Gastrocnemius medialis (tissue), 4 donors: ENCODE measurements at regions of chr4 and their contacts with region 1.

Region 1: GRCh38 chr4:185534866-185535611 is at the start of gene PDLIM3:
- DNase-seq: no peak
- ATAC-seq: peak; percentile 51 to 57
- H3K4me3 ChIP-seq: peak within 1 kb of the TSS; percentile 74 to 81 (median 80)
- H3K27ac ChIP-seq: peak within 1 kb of the TSS; percentile 89 to 98 (median 96)
- H3K4me1 ChIP-seq: peaks cover 26 to 34% of the 10 kb centered on the region in 2 donors
- H3K27me3 ChIP-seq: no peaks in the 10 kb centered on the region
- CTCF ChIP-seq: peak in 1 of 5 experiments; percentile 12
- POLR2A ChIP-seq: peak; percentile 99 to 100
- total RNA-seq, gene PDLIM3: 1,062 to 7,224 (median 2,598) TPM

Region 2: GRCh38 chr4:184343502-184344177 is 1191.4 kb before region 1 on chr4:
- in situ Hi-C with region 1: no loop called
- intact Hi-C with region 1: loop called (anchors 10 kb)
- DNase-seq: peak; percentile 77 to 84
- ATAC-seq: peak; percentile 64 to 69
- H3K4me3 ChIP-seq: peak overlapping the region; percentile 56 to 82 (median 67)
- H3K27ac ChIP-seq: peak overlapping the region; percentile 91 to 97 (median 92)
- H3K4me1 ChIP-seq: peaks cover 51 to 54% of the 10 kb centered on the region in 2 donors
- H3K27me3 ChIP-seq: no peaks in the 10 kb centered on the region
- CTCF ChIP-seq: no peak
- POLR2A ChIP-seq: peak; percentile 50 to 69

Region 3: GRCh38 chr4:185383491-185383890 is 151.5 kb before region 1 on chr4:
- in situ Hi-C with region 1: no loop called
- intact Hi-C with region 1: no loop called
- DNase-seq: no peak
- ATAC-seq: no peak
- H3K4me3 ChIP-seq: no peak overlapping the region
- H3K27ac ChIP-seq: no peak overlapping the region
- H3K4me1 ChIP-seq: peaks cover 0 to 4% of the 10 kb centered on the region in 2 donors
- H3K27me3 ChIP-seq: no peaks in the 10 kb centered on the region
- CTCF ChIP-seq: no peak
- POLR2A ChIP-seq: no peak

Region 4: DNA sequence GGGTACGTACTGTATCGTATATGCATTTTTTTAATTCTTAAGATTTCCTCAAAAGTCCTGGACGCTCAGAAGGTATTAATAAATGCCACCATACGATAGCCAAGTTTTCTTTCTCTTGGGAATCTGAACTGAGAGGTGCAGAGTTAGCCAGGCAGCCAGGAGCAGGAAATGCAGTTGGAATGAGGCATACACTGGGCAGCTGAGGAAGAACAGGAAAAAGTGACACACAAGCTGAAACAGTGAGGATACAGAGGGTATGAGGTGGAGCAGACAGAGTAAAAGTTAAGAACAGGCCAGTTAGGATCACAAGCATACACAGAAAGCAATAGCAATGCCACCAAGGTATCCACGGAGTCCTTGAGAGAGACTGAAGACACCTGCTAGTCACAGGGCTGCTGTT is 122.6 kb before region 1 on chr4:
- in situ Hi-C with region 1: no loop called
- intact Hi-C with region 1: no loop called
- DNase-seq: no peak
- ATAC-seq: no peak
- H3K4me3 ChIP-seq: no peak overlapping the region
- H3K27ac ChIP-seq: peak overlapping the region in 1 of 4 donors; percentile 8
- H3K4me1 ChIP-seq: peaks cover 0 to 4% of the 10 kb centered on the region in 2 donors
- H3K27me3 ChIP-seq: no peaks in the 10 kb centered on the region
- CTCF ChIP-seq: no peak
- POLR2A ChIP-seq: no peak

Region 5: GRCh38 chr4:185504098-185505047 is 30.7 kb before region 1 on chr4:
- in situ Hi-C with region 1: no loop called
- intact Hi-C with region 1: loop called (anchors 1 kb)
- DNase-seq: peak; percentile 91 to 97
- ATAC-seq: peak; percentile 82 to 87
- H3K4me3 ChIP-seq: peak overlapping the region in 3 of 4 donors; percentile 10 to 22 (median 17)
- H3K27ac ChIP-seq: peak overlapping the region; percentile 83 to 96 (median 92)
- H3K4me1 ChIP-seq: peaks cover 41 to 58% of the 10 kb centered on the region in 2 donors
- H3K27me3 ChIP-seq: no peaks in the 10 kb centered on the region
- CTCF ChIP-seq: no peak
- POLR2A ChIP-seq: peak in 1 of 2 donors; percentile 41

Region 6: GRCh38 chr4:185566972-185567371 is 31.9 kb after region 1 on chr4:
- in situ Hi-C with region 1: no loop called
- intact Hi-C with region 1: loop called (anchors 2 kb)
- DNase-seq: no peak
- ATAC-seq: peak; percentile 17 to 31
- H3K4me3 ChIP-seq: peak overlapping the region in 1 of 4 donors; percentile 2
- H3K27ac ChIP-seq: peak overlapping the region; percentile 87 to 93 (median 92)
- H3K4me1 ChIP-seq: peaks cover 49 to 52% of the 10 kb centered on the region in 2 donors
- H3K27me3 ChIP-seq: no peaks in the 10 kb centered on the region
- CTCF ChIP-seq: no peak
- POLR2A ChIP-seq: no peak

Region 7: GRCh38 chr4:185573651-185574199 is 38.7 kb after region 1 on chr4:
- in situ Hi-C with region 1: no loop called
- intact Hi-C with region 1: loop called (anchors 2 kb)
- DNase-seq: peak; percentile 82 to 90
- ATAC-seq: peak; percentile 76 to 82
- H3K4me3 ChIP-seq: peak overlapping the region in 2 of 4 donors; percentile 9 to 16
- H3K27ac ChIP-seq: peak overlapping the region; percentile 91 to 93 (median 92)
- H3K4me1 ChIP-seq: peaks cover 64 to 75% of the 10 kb centered on the region in 2 donors
- H3K27me3 ChIP-seq: no peaks in the 10 kb centered on the region
- CTCF ChIP-seq: no peak
- POLR2A ChIP-seq: peak; percentile 59 to 86